Activated B cell treated with CpG ODN at 0.5 μM for 24 hours (primary cell): ENCODE measurements at regions of chr22 and their contacts with region 1.

Region 1: GRCh38 chr22:30305519-30305905 is 16.2 kb upstream of the CASTOR1 start:
- DNase-seq: no peak
- ATAC-seq: peak; percentile 61
- H3K4me3 Mint-ChIP-seq: peak overlapping the region; percentile 21
- H3K27ac Mint-ChIP-seq: peak overlapping the region; percentile 81
- H3K4me1 Mint-ChIP-seq: peaks cover 100% of the 10 kb centered on the region
- H3K27me3 Mint-ChIP-seq: no peaks in the 10 kb centered on the region
- CTCF ChIP-seq: no peak

Region 2: DNA sequence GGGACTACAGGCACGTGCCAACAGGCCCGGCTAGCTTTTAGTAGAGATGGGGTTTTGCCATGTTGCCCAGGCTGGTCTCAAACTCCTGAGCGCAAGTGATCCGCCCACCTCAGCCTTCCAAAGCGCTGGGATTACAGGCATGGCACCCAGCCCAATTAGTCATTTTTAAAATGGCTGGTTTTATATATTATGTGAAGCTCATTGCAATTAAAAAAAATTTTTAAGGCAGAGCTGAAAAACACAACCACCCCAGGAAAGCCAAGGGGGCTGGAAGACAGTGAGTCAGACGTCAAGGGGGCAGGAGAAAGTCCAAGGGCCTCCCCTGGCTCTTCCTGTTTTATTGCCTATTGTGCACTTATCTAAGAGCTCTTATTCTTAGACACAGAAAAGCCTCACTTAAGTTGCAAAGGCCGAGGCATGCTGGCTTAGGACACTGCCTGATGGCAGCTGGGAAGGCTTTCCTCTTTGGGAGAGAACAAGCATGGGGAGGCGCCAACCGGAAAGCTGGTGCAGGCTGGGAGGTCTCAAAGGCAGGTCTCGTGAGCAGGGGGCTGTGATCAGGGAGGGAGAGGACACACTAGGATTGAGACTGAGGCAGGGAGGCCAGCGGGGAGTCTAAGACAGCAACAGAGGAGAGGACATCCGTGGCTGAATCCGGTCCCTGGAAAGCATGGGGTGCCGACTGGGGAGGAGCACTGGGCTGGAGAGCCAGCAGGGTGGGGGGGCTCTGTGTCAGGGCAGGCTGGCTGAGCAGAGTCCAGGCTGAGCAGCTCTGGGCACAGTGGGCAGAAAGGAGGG is 27.8 kb before region 1 on chr22:
- CTCF ChIA-PET with region 1: no interaction called
- POLR2A ChIA-PET with region 1: interaction called, 10 read pairs
- intact Hi-C with region 1: no loop called
- DNase-seq: no peak
- ATAC-seq: no peak
- H3K4me3 Mint-ChIP-seq: no peak overlapping the region
- H3K27ac Mint-ChIP-seq: no peak overlapping the region
- H3K4me1 Mint-ChIP-seq: peaks cover 10% of the 10 kb centered on the region
- H3K27me3 Mint-ChIP-seq: peaks cover 25% of the 10 kb centered on the region
- CTCF ChIP-seq: no peak

Region 3: GRCh38 chr22:30356449-30357235 is 51.1 kb after region 1 on chr22 and contains the starts of genes CCDC157 and SF3A1:
- CTCF ChIA-PET with region 1: no interaction called
- POLR2A ChIA-PET with region 1: interaction called, 48 read pairs
- intact Hi-C with region 1: loop called (anchors 1 kb)
- DNase-seq: peak; percentile 88
- ATAC-seq: peak; percentile 86
- H3K4me3 Mint-ChIP-seq: peak within 1 kb of the TSS; percentile 92
- H3K27ac Mint-ChIP-seq: peak within 1 kb of the TSS; percentile 76
- H3K4me1 Mint-ChIP-seq: peaks cover 43% of the 10 kb centered on the region
- H3K27me3 Mint-ChIP-seq: no peaks in the 10 kb centered on the region
- CTCF ChIP-seq: no peak
- total RNA-seq, gene CCDC157: 1.8 and 2.9 TPM in 2 replicates
- total RNA-seq, gene SF3A1: 263 and 269 TPM in 2 replicates

Region 4: DNA sequence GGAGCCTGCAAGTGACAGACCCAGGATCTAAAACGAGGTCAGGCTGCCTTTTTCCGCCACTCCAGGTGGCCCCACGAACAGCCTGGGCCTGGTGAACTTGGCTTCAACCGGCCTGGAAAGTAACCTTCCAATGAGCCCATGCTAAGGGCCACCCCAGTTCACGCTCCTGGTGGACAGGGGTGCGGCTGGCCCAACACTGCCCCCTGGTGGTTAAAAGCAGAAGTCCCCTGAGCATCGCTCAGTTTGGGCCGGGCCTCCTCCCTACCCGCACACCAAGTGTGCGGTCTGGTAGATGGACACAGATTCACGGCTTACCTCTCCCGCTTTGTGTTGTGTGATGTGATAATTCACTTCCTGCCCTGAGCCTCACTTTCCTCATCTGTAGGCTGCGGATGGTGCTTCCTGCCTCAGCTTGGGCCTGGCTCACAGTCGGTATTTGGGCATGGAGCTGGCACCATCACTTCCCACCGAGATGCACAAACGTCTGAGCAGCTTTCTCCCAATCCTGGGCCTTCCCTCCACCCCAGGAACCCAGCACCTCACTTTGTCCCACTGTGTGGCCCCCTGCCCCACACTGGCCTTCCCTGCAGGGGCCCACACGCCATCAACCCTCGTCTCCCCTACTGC is 180.0 kb after region 1 on chr22:
- CTCF ChIA-PET with region 1: no interaction called
- POLR2A ChIA-PET with region 1: interaction called, 11 read pairs
- intact Hi-C with region 1: no loop called
- DNase-seq: peak; percentile 66
- ATAC-seq: peak; percentile 93
- H3K4me3 Mint-ChIP-seq: no peak overlapping the region
- H3K27ac Mint-ChIP-seq: no peak overlapping the region
- H3K4me1 Mint-ChIP-seq: no peaks in the 10 kb centered on the region
- H3K27me3 Mint-ChIP-seq: peaks cover 9% of the 10 kb centered on the region
- CTCF ChIP-seq: peak; percentile 31